ENCODE measurements at regions of chr3 and their contacts with region 1.

Region 1: GRCh38 chr3:41190509-41191284 is 8.6 kb upstream of the CTNNB1 start:
- DNase-seq: no peak
- H3K4me3 ChIP-seq: no peak overlapping the region
- H3K27ac ChIP-seq: no peak overlapping the region
- H3K4me1 ChIP-seq: no peaks in the 10 kb centered on the region
- H3K27me3 ChIP-seq: peaks cover 8 to 23% of the 10 kb centered on the region in 2 experiments
- CTCF ChIP-seq: no peak
- POLR2A ChIP-seq: no peak

Region 2: DNA sequence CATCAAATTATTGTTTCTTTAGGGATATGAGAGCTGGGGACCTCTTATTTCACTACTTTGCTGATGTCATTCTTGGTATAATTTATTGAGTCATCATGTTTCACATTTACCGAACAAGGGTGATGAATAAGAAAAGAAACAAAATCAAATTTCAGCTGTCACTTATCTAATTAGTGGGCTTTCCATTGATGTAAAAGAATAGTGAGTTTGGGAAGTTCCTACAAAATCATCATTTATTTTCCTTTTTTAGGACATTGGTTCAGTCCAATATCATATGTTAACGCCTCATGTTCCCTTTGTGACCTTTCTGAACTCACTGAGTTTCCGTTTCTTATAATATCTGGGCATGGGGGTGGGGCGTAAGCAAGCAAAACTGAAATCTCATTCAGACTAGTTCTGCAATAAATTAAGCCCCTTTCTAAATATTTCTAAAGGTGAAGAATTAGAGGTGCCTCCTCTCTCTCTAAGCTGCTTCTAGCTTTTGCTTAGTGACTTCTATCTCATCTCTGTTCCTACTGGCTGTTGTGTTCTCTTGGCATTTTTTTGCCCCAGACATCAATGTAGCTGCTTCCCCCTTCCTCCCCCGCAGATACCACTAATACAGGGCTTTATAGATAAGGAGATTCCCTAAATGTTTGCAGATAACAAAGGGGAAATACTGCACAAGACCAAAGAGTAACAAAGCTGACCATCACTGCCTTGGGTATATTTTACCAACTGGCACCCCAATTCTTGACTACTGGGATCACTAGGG is 229.4 kb before region 1 on chr3:
- CTCF ChIA-PET with region 1: no interaction called
- POLR2A ChIA-PET with region 1: no interaction called
- dilution Hi-C with region 1: no loop called
- intact Hi-C with region 1: no loop called
- DNase-seq: no peak
- H3K4me3 ChIP-seq: no peak overlapping the region
- H3K27ac ChIP-seq: no peak overlapping the region
- H3K4me1 ChIP-seq: no peaks in the 10 kb centered on the region
- H3K27me3 ChIP-seq: no peaks in the 10 kb centered on the region
- CTCF ChIP-seq: no peak
- POLR2A ChIP-seq: no peak

Region 3: DNA sequence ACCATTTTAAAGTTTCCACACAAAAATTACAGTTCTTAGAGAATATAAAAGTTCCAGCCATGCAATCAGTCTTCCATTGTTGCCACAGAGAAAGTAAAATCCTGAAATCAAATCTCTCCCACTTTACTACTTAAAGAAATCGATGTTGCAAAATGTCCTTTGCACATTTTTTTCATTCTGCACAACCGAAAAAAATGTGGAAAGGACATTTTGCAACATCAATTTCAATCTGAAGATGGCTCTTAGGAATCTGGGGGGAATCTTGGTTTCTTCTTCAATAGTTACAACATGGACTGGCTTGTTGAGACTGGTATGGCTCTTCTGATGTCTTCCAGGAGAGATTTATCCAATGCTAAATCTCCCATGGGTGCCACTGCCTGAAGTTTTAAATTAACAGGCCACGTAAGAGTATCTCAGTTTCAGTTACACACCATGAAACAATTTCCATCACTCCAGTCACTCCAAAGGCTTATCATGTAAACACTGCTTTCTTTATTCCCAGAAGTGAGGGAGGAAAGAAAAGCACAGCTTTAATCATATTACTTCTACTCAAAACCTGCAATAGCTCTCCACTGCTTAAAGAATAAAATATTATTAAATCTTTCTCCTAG is 47.2 kb before region 1 on chr3:
- CTCF ChIA-PET with region 1: no interaction called
- POLR2A ChIA-PET with region 1: no interaction called
- dilution Hi-C with region 1: no loop called
- intact Hi-C with region 1: loop called (anchors 1 kb)
- DNase-seq: no peak
- H3K4me3 ChIP-seq: no peak overlapping the region
- H3K27ac ChIP-seq: no peak overlapping the region
- H3K4me1 ChIP-seq: peaks cover under 1% of the 10 kb centered on the region
- H3K27me3 ChIP-seq: peaks cover 4 to 10% of the 10 kb centered on the region in 2 experiments
- CTCF ChIP-seq: no peak
- POLR2A ChIP-seq: no peak